PC-9 (cell line): ENCODE measurements at regions of chr5 and their contacts with region 1.

Region 1: GRCh38 chr5:110054240-110054639 is 364.5 kb downstream of the MAN2A1 start:
- DNase-seq: no peak
- H3K4me3 ChIP-seq: no peak overlapping the region
- H3K27ac ChIP-seq: no peak overlapping the region
- H3K4me1 ChIP-seq: no peaks in the 10 kb centered on the region
- H3K27me3 ChIP-seq: no peaks in the 10 kb centered on the region
- CTCF ChIP-seq: no peak

Region 2: DNA sequence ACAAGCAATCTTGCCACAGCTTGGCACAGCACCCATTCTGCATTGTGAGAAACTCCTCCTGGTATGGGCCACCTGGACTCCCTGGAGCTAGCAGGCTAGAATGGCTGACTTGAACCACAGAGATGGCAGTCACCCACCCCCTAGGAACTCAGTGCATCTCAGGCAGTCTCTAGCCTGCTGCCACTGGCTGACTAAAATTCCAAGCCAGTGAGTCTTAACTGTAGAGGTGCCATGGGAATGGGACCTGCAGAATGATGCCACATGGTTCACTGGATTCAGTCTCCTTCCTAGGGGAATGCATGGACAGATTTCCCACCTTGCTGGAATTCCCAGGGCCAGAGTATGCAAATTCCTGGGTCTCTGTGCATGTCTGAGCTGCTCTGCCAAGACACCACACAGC is 18.4 kb after region 1 on chr5:
- CTCF ChIA-PET with region 1: no interaction called
- POLR2A ChIA-PET with region 1: no interaction called
- intact Hi-C with region 1: no loop called
- DNase-seq: no peak
- H3K4me3 ChIP-seq: no peak overlapping the region
- H3K27ac ChIP-seq: no peak overlapping the region
- H3K4me1 ChIP-seq: no peaks in the 10 kb centered on the region
- H3K27me3 ChIP-seq: no peaks in the 10 kb centered on the region
- CTCF ChIP-seq: no peak

Region 3: GRCh38 chr5:110275878-110276277 is 221.6 kb after region 1 on chr5:
- CTCF ChIA-PET with region 1: no interaction called
- POLR2A ChIA-PET with region 1: no interaction called
- intact Hi-C with region 1: no loop called
- DNase-seq: no peak
- H3K4me3 ChIP-seq: no peak overlapping the region
- H3K27ac ChIP-seq: no peak overlapping the region
- H3K4me1 ChIP-seq: no peaks in the 10 kb centered on the region
- H3K27me3 ChIP-seq: no peaks in the 10 kb centered on the region
- CTCF ChIP-seq: no peak

Region 4: GRCh38 chr5:110536120-110537115 is 482.2 kb after region 1 on chr5:
- CTCF ChIA-PET with region 1: no interaction called
- POLR2A ChIA-PET with region 1: no interaction called
- intact Hi-C with region 1: no loop called
- DNase-seq: no peak
- H3K4me3 ChIP-seq: no peak overlapping the region
- H3K27ac ChIP-seq: no peak overlapping the region
- H3K4me1 ChIP-seq: no peaks in the 10 kb centered on the region
- H3K27me3 ChIP-seq: no peaks in the 10 kb centered on the region
- CTCF ChIP-seq: no peak

Region 5: DNA sequence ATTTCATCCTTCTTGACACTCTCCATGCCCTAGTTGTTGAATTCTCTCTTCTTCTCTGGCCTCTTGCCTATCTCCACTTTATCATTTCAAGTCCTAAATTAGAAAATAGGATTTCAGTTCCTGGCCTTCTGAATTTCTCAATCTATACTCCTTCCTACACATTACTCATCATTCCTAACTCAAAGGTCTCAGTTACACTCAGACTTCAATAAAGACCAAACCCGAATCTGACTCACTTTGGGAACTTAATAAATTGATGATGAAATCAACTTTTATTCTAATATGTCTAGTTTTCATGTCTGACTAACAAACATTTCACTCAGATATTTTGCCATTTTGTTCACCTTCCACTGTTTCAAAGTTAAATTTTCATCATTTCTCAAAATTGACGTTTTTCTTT is 903.7 kb after region 1 on chr5:
- CTCF ChIA-PET with region 1: no interaction called
- POLR2A ChIA-PET with region 1: no interaction called
- intact Hi-C with region 1: no loop called
- DNase-seq: peak in 1 of 2 experiments; percentile 75
- H3K4me3 ChIP-seq: no peak overlapping the region
- H3K27ac ChIP-seq: peak overlapping the region; percentile 41
- H3K4me1 ChIP-seq: peaks cover 14% of the 10 kb centered on the region
- H3K27me3 ChIP-seq: no peaks in the 10 kb centered on the region
- CTCF ChIP-seq: no peak

Region 6: DNA sequence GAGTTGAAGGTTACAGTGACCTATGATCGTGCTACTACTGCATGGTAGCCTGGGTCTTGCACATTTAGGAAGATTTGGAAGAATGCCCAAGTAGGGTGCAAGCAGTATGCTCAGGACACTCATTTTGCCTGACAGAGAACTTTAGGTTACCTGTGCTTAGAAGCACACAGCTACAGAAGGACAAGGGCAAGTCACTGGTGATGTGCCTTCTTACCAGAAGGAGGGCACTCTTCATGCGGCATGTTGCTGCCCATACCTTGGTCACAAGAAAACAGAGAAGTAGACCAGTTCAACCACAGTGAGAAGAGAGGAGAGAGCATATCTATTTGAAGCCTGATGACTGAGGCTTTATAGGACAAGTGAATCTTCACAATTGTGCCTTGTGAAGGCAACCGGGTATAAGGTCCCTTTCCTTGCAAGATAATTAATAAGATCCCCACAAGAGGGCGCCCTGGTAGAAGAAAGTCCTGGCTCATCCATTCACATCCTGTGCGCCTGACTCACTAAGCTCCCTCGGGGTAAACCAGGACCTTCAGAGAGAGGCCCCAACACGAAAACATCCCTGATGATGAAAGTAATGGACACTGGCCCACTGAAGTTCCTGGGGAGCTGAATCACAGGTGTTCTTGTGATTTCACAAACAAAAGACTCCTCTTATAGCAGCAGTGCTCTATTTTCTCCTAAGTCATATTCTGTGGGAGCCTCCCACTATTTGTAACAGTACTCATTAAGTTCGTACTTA is 1496.2 kb after region 1 on chr5:
- CTCF ChIA-PET with region 1: no interaction called
- POLR2A ChIA-PET with region 1: interaction called, 12 read pairs
- intact Hi-C with region 1: no loop called
- DNase-seq: peak; percentile 38 to 61
- H3K4me3 ChIP-seq: no peak overlapping the region
- H3K27ac ChIP-seq: no peak overlapping the region
- H3K4me1 ChIP-seq: no peaks in the 10 kb centered on the region
- H3K27me3 ChIP-seq: no peaks in the 10 kb centered on the region
- CTCF ChIP-seq: peak; percentile 72